OCI-LY7 (cell line): ENCODE measurements at regions of chr15 and their contacts with region 1.

Region 1: DNA sequence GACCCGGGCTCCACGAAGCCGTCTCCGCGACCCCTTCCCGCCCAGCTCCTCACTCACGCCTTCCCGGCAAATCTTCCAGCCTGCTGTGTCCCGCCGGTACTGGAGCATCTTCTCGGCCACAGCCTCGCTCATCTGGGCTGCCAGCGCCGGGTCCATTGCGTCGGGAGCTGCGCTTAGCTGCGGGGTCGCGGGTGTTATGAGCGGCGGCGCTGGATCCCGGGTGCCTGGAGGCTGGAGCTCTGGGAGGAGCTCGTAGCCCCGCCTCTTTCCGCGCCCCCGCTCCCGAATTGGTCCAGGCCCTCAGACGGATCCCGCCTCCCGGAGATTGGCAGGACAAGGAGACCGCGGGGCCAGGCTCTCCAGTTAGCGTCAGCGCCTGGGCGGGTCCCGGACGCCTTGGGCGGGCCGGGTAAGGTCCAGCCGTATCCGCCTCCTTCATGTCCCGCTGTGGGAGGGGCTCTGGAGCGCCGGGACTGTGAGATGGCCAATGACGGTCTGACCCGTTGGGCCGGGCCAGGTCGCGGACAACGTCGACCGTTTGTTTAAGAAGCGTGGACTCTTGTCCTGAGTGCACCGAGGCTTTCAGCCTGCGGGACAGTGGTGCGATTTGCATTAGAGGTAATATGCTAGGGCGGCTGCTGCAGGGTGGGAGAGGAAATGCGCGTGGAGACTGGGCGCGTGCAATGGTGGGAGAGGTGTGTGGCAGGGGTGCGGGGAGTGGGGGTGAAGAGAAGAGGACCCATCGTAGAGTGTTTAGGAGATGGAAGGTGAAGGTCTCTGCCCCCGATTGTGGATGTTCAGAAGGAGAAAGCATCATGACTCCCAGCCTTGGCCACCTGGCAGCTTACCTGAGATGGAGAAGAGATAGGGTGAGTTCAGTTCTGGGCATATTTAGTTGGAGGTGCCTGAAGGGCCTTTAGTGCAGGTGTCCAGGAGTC is at the start of gene STARD5:
- DNase-seq: peak; percentile 96
- H3K4me3 ChIP-seq: peak within 1 kb of the TSS; percentile 78
- H3K27ac ChIP-seq: no peak within 1 kb of the TSS
- H3K4me1 ChIP-seq: peaks cover 42% of the 10 kb centered on the region
- CTCF ChIP-seq: no peak
- total RNA-seq, gene STARD5: 12.4 and 20.3 TPM in 2 replicates

Region 2: DNA sequence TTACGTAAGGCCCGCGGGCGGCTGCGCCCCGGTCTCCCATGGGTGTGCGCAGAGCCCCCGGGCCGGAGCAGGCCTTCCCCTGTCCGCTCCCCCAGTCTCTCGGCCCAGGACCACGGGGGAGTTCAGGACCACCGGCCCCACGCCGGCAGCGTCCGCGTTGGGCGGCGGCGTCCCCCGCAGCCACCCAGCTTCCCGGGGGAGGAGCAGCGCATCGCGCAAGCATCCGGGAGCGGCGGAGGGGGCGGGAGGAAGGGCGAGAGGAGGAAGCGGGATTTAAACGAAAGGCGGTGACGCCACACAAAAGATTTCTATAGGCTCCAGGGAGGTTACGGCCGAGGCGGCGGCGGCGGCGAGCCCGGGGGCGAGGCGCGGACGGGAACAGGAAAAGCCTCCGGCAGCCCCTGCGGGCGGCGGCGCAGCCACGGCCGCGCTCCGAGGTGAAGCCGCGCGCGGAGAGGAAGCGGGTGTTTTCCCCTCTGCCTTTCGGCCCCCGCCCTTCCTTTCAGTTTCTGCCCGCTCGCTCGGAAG is 323.5 kb before region 1 on chr15 and contains the start of gene TLNRD1:
- CTCF ChIA-PET with region 1: no interaction called
- POLR2A ChIA-PET with region 1: no interaction called
- intact Hi-C with region 1: loop called (anchors 5 kb)
- DNase-seq: peak; percentile 86
- H3K4me3 ChIP-seq: peak within 1 kb of the TSS; percentile 77
- H3K27ac ChIP-seq: peak within 1 kb of the TSS; percentile 65
- H3K4me1 ChIP-seq: peaks cover 31% of the 10 kb centered on the region
- CTCF ChIP-seq: no peak
- total RNA-seq, gene TLNRD1: 17.0 and 19.9 TPM in 2 replicates

Region 3: DNA sequence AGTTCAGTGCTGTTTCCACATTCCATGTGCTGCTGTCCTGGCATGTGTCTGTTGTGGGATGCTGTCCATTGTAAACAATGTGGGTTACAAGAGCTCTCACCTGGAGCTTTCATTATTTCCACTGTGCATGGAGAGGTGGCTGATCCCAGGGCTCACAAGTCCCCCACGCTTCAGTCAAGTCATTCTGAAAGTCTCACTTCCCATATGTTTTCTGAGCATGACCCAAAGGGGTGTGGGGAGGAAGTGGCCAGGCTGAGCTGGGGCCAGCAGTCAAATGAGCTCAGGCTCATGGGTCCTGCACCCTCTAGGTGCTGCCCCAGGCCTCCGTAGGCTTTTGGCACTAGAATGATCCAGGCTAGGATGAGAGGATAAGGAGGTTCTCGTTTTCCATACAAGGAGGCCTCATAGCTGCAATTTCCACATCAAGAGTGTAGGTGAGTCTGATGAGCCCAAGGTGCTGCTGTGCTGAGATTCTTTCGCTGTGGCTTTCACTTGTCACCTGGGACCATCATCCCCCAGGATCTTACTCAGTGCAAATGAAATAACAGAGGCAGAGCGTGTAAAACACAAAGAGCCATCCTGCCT is 22.3 kb before region 1 on chr15:
- CTCF ChIA-PET with region 1: interaction called, 10 read pairs
- POLR2A ChIA-PET with region 1: interaction called, 12 read pairs
- intact Hi-C with region 1: loop called (anchors 2 kb)
- DNase-seq: peak; percentile 65
- H3K4me3 ChIP-seq: peak overlapping the region; percentile 92
- H3K27ac ChIP-seq: peak overlapping the region; percentile 98
- H3K4me1 ChIP-seq: peaks cover 62% of the 10 kb centered on the region
- CTCF ChIP-seq: no peak